Activated CD4-positive, alpha-beta T cell treated with anti-CD3 and anti-CD28 coated beads for 36 hours (primary cell): ENCODE measurements at regions of chr15 and their contacts with region 1.

Region 1: GRCh38 chr15:63188926-63189871 is at the start of gene RAB8B:
- DNase-seq: peak; percentile 100
- ATAC-seq: peak; percentile 76
- H3K4me3 Mint-ChIP-seq: peak within 1 kb of the TSS; percentile 99
- H3K27ac Mint-ChIP-seq: peak within 1 kb of the TSS; percentile 97
- H3K4me1 Mint-ChIP-seq: peaks cover 39% of the 10 kb centered on the region
- H3K27me3 Mint-ChIP-seq: no peaks in the 10 kb centered on the region
- total RNA-seq, gene RAB8B: 147 to 260 TPM

Region 2: DNA sequence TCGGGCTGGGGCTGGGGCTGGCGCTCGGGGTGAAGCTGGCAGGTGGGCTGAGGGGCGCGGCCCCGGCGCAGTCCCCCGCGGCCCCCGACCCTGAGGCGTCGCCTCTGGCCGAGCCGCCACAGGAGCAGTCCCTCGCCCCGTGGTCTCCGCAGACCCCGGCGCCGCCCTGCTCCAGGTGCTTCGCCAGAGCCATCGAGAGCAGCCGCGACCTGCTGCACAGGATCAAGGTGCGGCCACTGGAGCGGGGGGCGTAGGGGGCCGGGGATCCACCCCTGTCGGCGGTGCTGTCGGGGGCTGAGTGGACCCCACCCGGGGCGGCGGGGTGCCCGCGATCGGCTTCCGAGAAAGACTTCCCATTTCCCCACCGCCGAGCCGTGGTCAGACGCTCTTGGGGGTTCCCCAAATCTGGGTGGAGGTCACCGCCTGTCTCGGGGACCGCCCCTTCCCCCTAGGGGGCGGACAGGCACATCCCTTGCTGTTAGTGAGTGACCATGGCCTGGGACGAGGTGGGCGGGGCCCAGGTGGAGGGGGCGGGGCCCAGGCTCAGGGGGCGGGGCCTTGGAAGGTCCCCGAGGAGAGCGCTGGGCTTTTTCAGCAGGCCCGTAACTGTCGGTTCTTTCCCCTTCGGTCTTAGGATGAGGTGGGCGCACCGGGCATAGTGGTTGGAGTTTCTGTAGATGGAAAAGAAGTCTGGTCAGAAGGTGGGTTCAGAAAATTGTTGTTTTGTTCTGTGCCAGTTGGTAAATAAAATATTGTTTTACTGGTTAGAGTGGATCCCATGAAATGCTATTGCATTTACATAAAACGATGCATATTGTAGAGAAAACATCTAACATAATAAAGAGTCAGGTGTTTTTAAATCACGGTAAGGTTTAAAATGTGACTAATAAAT is 67.0 kb before region 1 on chr15:
- CTCF ChIA-PET with region 1: no interaction called
- POLR2A ChIA-PET with region 1: no interaction called
- intact Hi-C with region 1: loop called (anchors 1 to 5 kb)
- DNase-seq: peak; percentile 91
- ATAC-seq: peak; percentile 89
- H3K4me3 Mint-ChIP-seq: peak overlapping the region; percentile 92
- H3K27ac Mint-ChIP-seq: peak overlapping the region; percentile 88
- H3K4me1 Mint-ChIP-seq: peaks cover 12% of the 10 kb centered on the region
- H3K27me3 Mint-ChIP-seq: no peaks in the 10 kb centered on the region

Region 3: DNA sequence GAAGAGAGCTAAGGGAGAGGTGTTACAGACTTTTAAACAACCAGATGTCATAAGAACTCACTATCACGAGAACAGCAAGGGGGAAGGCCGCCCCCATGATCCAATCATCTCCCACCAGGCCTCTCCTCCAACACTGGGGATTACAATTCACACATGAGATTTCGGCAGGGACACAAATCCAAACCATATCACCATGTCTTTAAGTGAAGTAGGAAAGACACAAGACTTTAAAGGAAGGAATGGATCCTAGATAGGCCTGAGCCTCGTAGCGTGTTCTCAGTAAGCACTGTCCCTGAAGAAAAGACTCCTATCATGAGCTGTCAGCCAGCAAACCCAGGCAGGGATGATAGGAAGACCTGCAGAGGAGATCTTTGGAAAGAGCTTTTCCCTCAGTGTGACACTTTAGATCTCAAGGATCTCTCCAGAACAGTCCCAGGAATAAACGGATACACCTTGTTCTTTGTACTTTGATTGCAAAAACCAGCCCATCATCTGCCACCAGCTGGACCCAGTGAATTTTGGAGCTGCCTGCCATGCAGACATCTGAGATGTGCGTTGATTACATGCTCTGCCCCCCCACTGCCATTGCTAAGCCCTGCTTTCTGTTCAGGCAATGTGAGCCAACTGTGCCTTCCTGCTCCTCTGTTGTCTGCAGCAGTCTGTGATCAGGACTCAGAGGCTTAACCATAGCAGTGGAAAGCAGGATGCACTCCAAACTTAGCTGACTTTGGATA is 16.7 kb before region 1 on chr15:
- CTCF ChIA-PET with region 1: interaction called, 14 read pairs
- POLR2A ChIA-PET with region 1: interaction called, 13 read pairs
- intact Hi-C with region 1: loop called (anchors 1 kb)
- DNase-seq: no peak
- ATAC-seq: no peak
- H3K4me3 Mint-ChIP-seq: no peak overlapping the region
- H3K27ac Mint-ChIP-seq: peak overlapping the region; percentile 16
- H3K4me1 Mint-ChIP-seq: peaks cover 14% of the 10 kb centered on the region
- H3K27me3 Mint-ChIP-seq: no peaks in the 10 kb centered on the region

Region 4: GRCh38 chr15:63212050-63213004 is 23.1 kb after region 1 on chr15:
- CTCF ChIA-PET with region 1: interaction called, 14 read pairs
- POLR2A ChIA-PET with region 1: interaction called, 21 read pairs
- intact Hi-C with region 1: loop called (anchors 1 kb)
- DNase-seq: peak; percentile 44
- ATAC-seq: peak; percentile 70
- H3K4me3 Mint-ChIP-seq: peak overlapping the region; percentile 53
- H3K27ac Mint-ChIP-seq: peak overlapping the region; percentile 98
- H3K4me1 Mint-ChIP-seq: peaks cover 91% of the 10 kb centered on the region
- H3K27me3 Mint-ChIP-seq: no peaks in the 10 kb centered on the region

Region 5: GRCh38 chr15:63277038-63277892 is 88.1 kb after region 1 on chr15 and contains the start of gene APH1B:
- CTCF ChIA-PET with region 1: no interaction called
- POLR2A ChIA-PET with region 1: interaction called, 5 read pairs
- intact Hi-C with region 1: loop called (anchors 1 kb)
- DNase-seq: peak; percentile 80
- ATAC-seq: peak; percentile 83
- H3K4me3 Mint-ChIP-seq: peak within 1 kb of the TSS; percentile 78
- H3K27ac Mint-ChIP-seq: peak within 1 kb of the TSS; percentile 88
- H3K4me1 Mint-ChIP-seq: peaks cover 29% of the 10 kb centered on the region
- H3K27me3 Mint-ChIP-seq: no peaks in the 10 kb centered on the region
- total RNA-seq, gene APH1B: 6.5 to 7.8 TPM

Region 6: GRCh38 chr15:63497642-63498467 is 308.7 kb after region 1 on chr15:
- CTCF ChIA-PET with region 1: interaction called, 4 read pairs
- POLR2A ChIA-PET with region 1: no interaction called
- intact Hi-C with region 1: loop called in 1 of 2 experiments (anchors 5 kb)
- DNase-seq: peak; percentile 71
- ATAC-seq: peak; percentile 56
- H3K4me3 Mint-ChIP-seq: no peak overlapping the region
- H3K27ac Mint-ChIP-seq: no peak overlapping the region
- H3K4me1 Mint-ChIP-seq: peaks cover 74% of the 10 kb centered on the region
- H3K27me3 Mint-ChIP-seq: no peaks in the 10 kb centered on the region